ENCODE measurements at regions of chr2 and their contacts with region 1.

Region 1: GRCh38 chr2:231482806-231483391 is 18.6 kb upstream of the NCL start:
- DNase-seq: peak; percentile 46 to 85 (median 65)
- ATAC-seq: peak; percentile 77
- H3K4me3 ChIP-seq: peak overlapping the region; percentile 78
- H3K4me3 Mint-ChIP-seq: peak overlapping the region; percentile 78
- H3K27ac ChIP-seq: peak overlapping the region; percentile 70 to 88
- H3K27ac Mint-ChIP-seq: peak overlapping the region; percentile 87
- H3K4me1 ChIP-seq: peaks cover 21% of the 10 kb centered on the region
- H3K4me1 Mint-ChIP-seq: peaks cover 11% of the 10 kb centered on the region
- H3K27me3 ChIP-seq: no peaks in the 10 kb centered on the region
- H3K27me3 Mint-ChIP-seq: no peaks in the 10 kb centered on the region
- CTCF ChIP-seq: peak; percentile 91

Region 2: GRCh38 chr2:231514103-231514950 is 31.4 kb after region 1 on chr2:
- CTCF ChIA-PET with region 1: interaction called, 12 read pairs
- POLR2A ChIA-PET with region 1: interaction called, 16 read pairs
- intact Hi-C with region 1: loop called (anchors 2 kb)
- DNase-seq: peak; percentile 96 to 99 (median 98)
- ATAC-seq: peak; percentile 96
- H3K4me3 ChIP-seq: peak overlapping the region; percentile 78
- H3K4me3 Mint-ChIP-seq: peak overlapping the region; percentile 91
- H3K27ac ChIP-seq: peak overlapping the region; percentile 87 to 95
- H3K27ac Mint-ChIP-seq: peak overlapping the region; percentile 94
- H3K4me1 ChIP-seq: peaks cover 12% of the 10 kb centered on the region
- H3K4me1 Mint-ChIP-seq: peaks cover 24% of the 10 kb centered on the region
- H3K27me3 ChIP-seq: no peaks in the 10 kb centered on the region
- H3K27me3 Mint-ChIP-seq: no peaks in the 10 kb centered on the region
- CTCF ChIP-seq: no peak

Measured in CD4-positive, alpha-beta T cell (primary cell).